PC-3 (cell line): ENCODE measurements at regions of chr2 and their contacts with region 1.

Region 1: DNA sequence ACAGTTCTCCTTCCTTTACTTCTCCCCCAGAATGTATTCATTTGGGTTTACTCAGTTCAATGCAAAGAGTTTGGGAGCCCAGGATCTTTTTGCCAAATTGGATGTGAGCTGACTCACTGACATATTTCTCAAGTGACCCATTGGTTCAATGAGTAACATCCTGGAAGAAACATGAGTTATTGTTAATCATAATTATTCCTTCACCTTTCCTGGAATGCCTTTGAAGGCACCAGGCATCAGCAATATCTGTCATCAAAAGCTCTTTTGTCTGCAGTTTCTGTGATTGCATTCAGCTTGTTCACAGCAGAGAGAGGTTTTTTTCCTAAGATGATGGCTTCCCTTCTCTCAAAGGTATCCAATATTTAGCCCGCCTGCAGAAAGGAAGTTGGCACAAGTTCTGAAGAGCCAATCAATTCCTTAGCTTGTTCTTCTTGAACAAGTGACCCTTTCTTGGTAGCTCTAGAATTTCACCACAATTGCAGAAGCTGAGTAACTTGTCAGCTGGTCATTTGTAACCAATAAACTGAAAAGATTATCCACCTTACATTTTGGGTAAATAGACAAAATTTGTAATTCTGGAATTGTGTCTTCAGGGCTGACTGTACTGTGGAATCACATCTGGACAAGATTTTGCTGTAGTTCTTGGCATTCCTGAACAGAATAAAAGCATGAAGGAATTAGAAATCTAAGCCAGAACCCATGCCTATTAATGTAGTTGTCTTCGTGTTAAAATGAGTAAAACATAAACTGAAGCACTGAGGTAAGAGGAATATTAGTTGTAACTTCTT is 72.2 kb upstream of the TMEM17 start:
- DNase-seq: peak; percentile 98
- ATAC-seq: peak; percentile 73
- H3K4me3 ChIP-seq: peak overlapping the region; percentile 38; the same call in 1 of the 2 replicates
- H3K27ac ChIP-seq: peak overlapping the region; percentile 94
- H3K4me1 ChIP-seq: peaks cover 29% of the 10 kb centered on the region
- H3K27me3 ChIP-seq: no peaks in the 10 kb centered on the region
- CTCF ChIP-seq: no peak

Region 2: DNA sequence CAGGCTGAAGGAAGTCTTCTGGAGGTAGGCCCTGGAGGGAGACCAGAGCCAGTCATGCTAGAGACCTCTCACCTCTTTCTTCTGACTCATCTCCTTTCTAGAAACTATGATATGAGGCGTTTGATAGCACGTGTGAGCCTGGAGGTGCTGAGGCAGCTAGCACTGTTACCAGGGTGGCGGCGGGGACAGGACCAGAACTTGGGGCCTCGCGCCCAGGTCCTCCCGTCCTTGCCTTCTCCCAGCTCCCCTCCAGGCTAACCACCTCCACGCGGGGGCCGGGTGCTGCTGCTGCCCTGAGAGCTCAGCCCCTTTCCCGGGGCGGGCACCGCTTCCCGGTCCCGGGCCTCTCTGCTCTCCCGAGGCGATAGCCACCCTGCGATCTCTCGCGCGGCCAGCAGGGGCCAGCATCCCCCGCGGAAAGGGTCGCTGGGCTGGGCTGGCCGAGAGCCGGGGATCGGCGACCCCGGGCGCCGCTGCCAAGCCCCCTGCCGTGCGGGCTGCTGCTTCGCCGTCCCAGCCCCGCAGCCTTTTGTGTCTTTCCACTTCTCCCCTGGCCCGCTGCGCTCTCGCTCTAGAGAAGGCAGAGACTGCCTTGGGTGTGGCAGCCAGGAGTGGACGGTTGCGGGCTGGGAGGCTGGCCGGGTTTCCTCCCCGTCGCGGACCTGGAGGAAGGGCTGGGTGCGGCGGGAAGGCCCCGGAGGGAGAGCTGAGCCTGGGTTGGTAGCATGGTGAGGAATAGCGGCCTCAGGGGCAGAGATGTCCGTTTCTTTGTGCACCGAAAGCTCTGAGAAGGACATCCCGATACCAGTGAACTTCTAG is 121.3 kb before region 1 on chr2:
- CTCF ChIA-PET with region 1: interaction called, 3 read pairs
- POLR2A ChIA-PET with region 1: no interaction called
- intact Hi-C with region 1: loop called (anchors 1 kb)
- DNase-seq: peak; percentile 85
- ATAC-seq: peak; percentile 84
- H3K4me3 ChIP-seq: peak overlapping the region; percentile 80
- H3K27ac ChIP-seq: peak overlapping the region; percentile 67
- H3K4me1 ChIP-seq: peaks cover 24% of the 10 kb centered on the region
- H3K27me3 ChIP-seq: no peaks in the 10 kb centered on the region
- CTCF ChIP-seq: peak; percentile 92

Region 3: GRCh38 chr2:62505750-62506420 is 72.3 kb before region 1 on chr2 and contains the start of gene TMEM17:
- CTCF ChIA-PET with region 1: interaction called, 4 read pairs
- POLR2A ChIA-PET with region 1: interaction called, 12 read pairs
- intact Hi-C with region 1: loop called (anchors 1 kb)
- DNase-seq: peak; percentile 94
- ATAC-seq: peak; percentile 90
- H3K4me3 ChIP-seq: peak within 1 kb of the TSS; percentile 77
- H3K27ac ChIP-seq: peak within 1 kb of the TSS; percentile 72
- H3K4me1 ChIP-seq: peaks cover 7% of the 10 kb centered on the region; the same call in 1 of the 2 replicates
- H3K27me3 ChIP-seq: no peaks in the 10 kb centered on the region
- CTCF ChIP-seq: no peak
- total RNA-seq, gene TMEM17: 1.6 and 2.9 TPM in 2 replicates

Region 4: GRCh38 chr2:62526531-62527381 is 51.4 kb before region 1 on chr2:
- CTCF ChIA-PET with region 1: no interaction called
- POLR2A ChIA-PET with region 1: no interaction called
- intact Hi-C with region 1: no loop called
- DNase-seq: no peak
- ATAC-seq: no peak
- H3K4me3 ChIP-seq: no peak overlapping the region
- H3K27ac ChIP-seq: no peak overlapping the region
- H3K4me1 ChIP-seq: no peaks in the 10 kb centered on the region
- H3K27me3 ChIP-seq: no peaks in the 10 kb centered on the region
- CTCF ChIP-seq: no peak

Region 5: GRCh38 chr2:62604336-62604735 is 26.1 kb after region 1 on chr2:
- CTCF ChIA-PET with region 1: no interaction called
- POLR2A ChIA-PET with region 1: no interaction called
- intact Hi-C with region 1: loop called (anchors 1 kb)
- DNase-seq: peak; percentile 82
- ATAC-seq: peak; percentile 91
- H3K4me3 ChIP-seq: 0 out of 2 replicates have a peak overlapping the region, but pooled peaks have one; percentile 17
- H3K27ac ChIP-seq: peak overlapping the region; percentile 42
- H3K4me1 ChIP-seq: peaks cover 12% of the 10 kb centered on the region
- H3K27me3 ChIP-seq: no peaks in the 10 kb centered on the region
- CTCF ChIP-seq: no peak

Region 6: GRCh38 chr2:62705007-62705829 is 127.0 kb after region 1 on chr2 and contains the start of gene EHBP1:
- CTCF ChIA-PET with region 1: no interaction called
- POLR2A ChIA-PET with region 1: interaction called, 6 read pairs
- intact Hi-C with region 1: loop called (anchors 1 kb)
- DNase-seq: peak; percentile 99
- ATAC-seq: peak; percentile 91
- H3K4me3 ChIP-seq: peak within 1 kb of the TSS; percentile 76
- H3K27ac ChIP-seq: peak within 1 kb of the TSS; percentile 35
- H3K4me1 ChIP-seq: peaks cover 42% of the 10 kb centered on the region
- H3K27me3 ChIP-seq: no peaks in the 10 kb centered on the region
- CTCF ChIP-seq: no peak
- total RNA-seq, gene EHBP1: 25.7 and 35.1 TPM in 2 replicates

Region 7: DNA sequence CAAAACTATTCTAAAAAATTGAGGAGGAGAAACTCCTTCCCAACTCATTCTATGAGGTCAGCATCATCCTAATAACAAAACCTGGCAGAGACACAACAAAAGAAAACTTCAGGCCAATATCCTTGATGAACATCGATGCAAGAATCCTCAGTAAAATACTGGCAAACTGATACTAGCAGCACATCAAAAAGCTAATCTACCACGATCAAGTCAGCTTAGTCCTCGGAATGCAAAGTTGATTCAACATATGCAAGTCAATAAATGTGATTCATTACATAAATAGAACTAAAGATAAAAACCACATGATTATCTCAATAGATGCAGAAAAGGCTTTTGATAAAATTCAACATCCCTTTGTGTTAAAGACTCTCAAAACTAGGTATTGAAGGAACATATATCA is 190.4 kb after region 1 on chr2:
- CTCF ChIA-PET with region 1: no interaction called
- POLR2A ChIA-PET with region 1: no interaction called
- intact Hi-C with region 1: loop called (anchors 1 kb)
- DNase-seq: peak; percentile 78
- ATAC-seq: peak; percentile 64
- H3K4me3 ChIP-seq: no peak overlapping the region
- H3K27ac ChIP-seq: peak overlapping the region; percentile 32
- H3K4me1 ChIP-seq: peaks cover 29% of the 10 kb centered on the region
- H3K27me3 ChIP-seq: no peaks in the 10 kb centered on the region
- CTCF ChIP-seq: no peak

Region 8: DNA sequence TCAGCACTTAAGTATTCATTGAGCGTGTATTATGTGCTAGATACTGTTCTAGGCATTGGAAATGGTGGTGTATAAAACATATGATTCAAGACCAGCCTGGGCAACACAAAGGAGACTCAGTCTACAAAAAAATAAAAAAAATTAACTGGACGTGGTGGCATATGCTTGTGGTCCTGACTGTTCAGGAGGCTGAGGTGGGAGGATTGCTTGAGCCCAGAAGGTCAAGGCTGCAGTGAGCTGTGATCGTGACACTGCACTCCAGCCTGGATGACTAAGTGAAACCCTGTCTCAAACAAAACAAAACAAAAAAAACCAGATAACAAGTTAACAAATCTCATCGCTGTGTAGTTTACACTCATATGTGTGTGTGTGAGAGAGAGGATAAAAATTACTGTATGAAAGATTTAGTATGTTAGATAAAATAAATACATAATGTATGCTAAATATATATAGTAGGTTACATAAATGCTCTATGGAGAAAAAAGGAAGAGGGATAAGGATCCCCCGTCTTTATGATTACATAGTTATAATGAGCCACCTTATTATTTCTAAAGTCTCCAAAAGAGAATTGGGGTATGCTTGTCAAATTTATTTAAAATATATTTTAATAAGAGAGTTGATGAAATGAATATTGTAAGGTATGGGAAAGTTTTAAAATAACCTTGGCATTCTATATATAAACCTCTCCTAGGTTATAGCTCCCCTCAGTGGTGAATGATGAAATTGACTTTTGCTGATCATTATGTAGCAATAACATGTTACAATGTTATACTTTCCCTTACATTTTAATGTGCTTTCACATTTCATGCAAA is 196.6 kb after region 1 on chr2:
- CTCF ChIA-PET with region 1: no interaction called
- POLR2A ChIA-PET with region 1: no interaction called
- intact Hi-C with region 1: loop called (anchors 2 kb)
- DNase-seq: peak; percentile 80
- ATAC-seq: peak; percentile 81
- H3K4me3 ChIP-seq: no peak overlapping the region
- H3K27ac ChIP-seq: peak overlapping the region; percentile 31
- H3K4me1 ChIP-seq: peaks cover 14% of the 10 kb centered on the region
- H3K27me3 ChIP-seq: no peaks in the 10 kb centered on the region
- CTCF ChIP-seq: peak; percentile 80